Dorsolateral prefrontal cortex (tissue), 120 donors: ENCODE measurements at regions of chr4 and their contacts with region 1.

Region 1: GRCh38 chr4:187606581-187606980 is 389.0 kb upstream of the ZFP42 start:
- DNase-seq: peak in 3 of 10 donors; percentile 41 to 58 (median 51)
- H3K4me3 ChIP-seq: no peak overlapping the region
- H3K27ac ChIP-seq: no peak overlapping the region
- H3K27me3 ChIP-seq: peaks cover 0 to 7% (median 0%) of the 10 kb centered on the region in 45 donors
- CTCF ChIP-seq: peak; percentile 70 to 93 (median 84)

Region 2: GRCh38 chr4:187321711-187322110 is 284.9 kb before region 1 on chr4:
- intact Hi-C with region 1: no loop called
- DNase-seq: no peak
- H3K4me3 ChIP-seq: no peak overlapping the region
- H3K27ac ChIP-seq: no peak overlapping the region
- H3K27me3 ChIP-seq: no peaks in the 10 kb centered on the region
- CTCF ChIP-seq: no peak

Region 3: DNA sequence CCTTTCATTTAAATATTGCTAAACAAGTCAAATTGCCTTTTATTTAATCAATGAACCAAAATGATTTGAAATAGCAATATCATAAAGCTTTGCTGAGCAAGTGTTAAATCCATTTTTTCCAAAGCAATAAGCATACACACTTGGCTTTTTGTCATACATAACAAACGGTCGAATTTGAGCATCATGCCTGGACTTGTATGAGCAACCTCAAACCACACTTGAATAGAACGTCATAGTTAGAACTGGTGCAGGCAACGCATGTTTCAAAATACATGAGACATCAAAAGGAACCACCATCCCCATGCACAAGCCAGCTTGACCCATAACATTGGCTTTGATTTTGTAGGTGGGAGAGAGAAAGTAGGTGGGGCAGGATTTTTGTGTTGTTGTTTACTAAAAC is 1521.8 kb after region 1 on chr4:
- intact Hi-C with region 1: loop called in 1 of 2 experiments (anchors 5 kb)
- DNase-seq: no peak
- H3K4me3 ChIP-seq: no peak overlapping the region
- H3K27ac ChIP-seq: no peak overlapping the region
- H3K27me3 ChIP-seq: peaks cover 0 to 3% (median 0%) of the 10 kb centered on the region in 45 donors
- CTCF ChIP-seq: no peak

Region 4: GRCh38 chr4:189202182-189202868 is 1595.7 kb after region 1 on chr4:
- intact Hi-C with region 1: loop called in 1 of 2 experiments (anchors 10 kb)
- DNase-seq: peak in 4 of 10 donors; percentile 7 to 58 (median 35)
- H3K4me3 ChIP-seq: peak overlapping the region in 45 of 59 donors; percentile 3 to 59 (median 28)
- H3K27ac ChIP-seq: no peak overlapping the region
- H3K27me3 ChIP-seq: peaks cover 0 to 31% (median 3%) of the 10 kb centered on the region in 45 donors
- CTCF ChIP-seq: peak; percentile 39 to 88 (median 76)